ENCODE measurements at regions of chr2 and their contacts with region 1.

Region 1: DNA sequence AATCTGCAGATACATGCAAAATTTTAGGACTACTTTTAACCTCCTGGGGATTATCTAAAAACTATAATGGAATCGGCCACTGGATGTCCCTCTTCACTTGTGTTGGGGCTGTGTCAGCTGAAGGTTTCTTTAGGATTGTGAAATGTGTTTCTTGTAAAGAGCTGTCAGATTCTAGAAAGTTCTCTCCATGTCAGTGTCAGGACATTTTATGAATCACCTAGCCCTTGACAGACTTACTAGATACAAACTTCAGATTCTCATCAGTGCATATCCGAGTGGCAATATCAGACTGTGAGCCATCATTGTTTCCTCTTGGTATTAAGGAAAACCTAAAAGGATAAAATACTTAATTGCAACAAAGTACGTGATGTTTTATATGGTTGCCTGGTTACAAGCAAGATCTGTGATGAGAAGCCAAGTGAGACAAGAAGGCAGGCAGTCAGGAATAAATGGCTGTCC is 107.3 kb downstream of the CPS1 start:
- DNase-seq: peak in 1 of 2 experiments; percentile 16
- H3K4me3 ChIP-seq: no peak overlapping the region
- H3K4me3 Mint-ChIP-seq: no peak overlapping the region
- H3K27ac Mint-ChIP-seq: no peak overlapping the region
- H3K4me1 ChIP-seq: no peaks in the 10 kb centered on the region
- H3K4me1 Mint-ChIP-seq: no peaks in the 10 kb centered on the region
- H3K27me3 ChIP-seq: no peaks in the 10 kb centered on the region
- H3K27me3 Mint-ChIP-seq: peaks cover 3% of the 10 kb centered on the region
- CTCF ChIP-seq: peak; percentile 21 to 26

Region 2: GRCh38 chr2:210445116-210445707 is 218.4 kb before region 1 on chr2:
- CTCF ChIA-PET with region 1: no interaction called
- POLR2A ChIA-PET with region 1: no interaction called
- intact Hi-C with region 1: no loop called
- DNase-seq: peak in 1 of 2 experiments; percentile 5
- H3K4me3 ChIP-seq: no peak overlapping the region
- H3K4me3 Mint-ChIP-seq: no peak overlapping the region
- H3K27ac Mint-ChIP-seq: no peak overlapping the region
- H3K4me1 ChIP-seq: no peaks in the 10 kb centered on the region
- H3K4me1 Mint-ChIP-seq: no peaks in the 10 kb centered on the region
- H3K27me3 ChIP-seq: no peaks in the 10 kb centered on the region
- H3K27me3 Mint-ChIP-seq: no peaks in the 10 kb centered on the region
- CTCF ChIP-seq: peak; percentile 48 to 57

Region 3: DNA sequence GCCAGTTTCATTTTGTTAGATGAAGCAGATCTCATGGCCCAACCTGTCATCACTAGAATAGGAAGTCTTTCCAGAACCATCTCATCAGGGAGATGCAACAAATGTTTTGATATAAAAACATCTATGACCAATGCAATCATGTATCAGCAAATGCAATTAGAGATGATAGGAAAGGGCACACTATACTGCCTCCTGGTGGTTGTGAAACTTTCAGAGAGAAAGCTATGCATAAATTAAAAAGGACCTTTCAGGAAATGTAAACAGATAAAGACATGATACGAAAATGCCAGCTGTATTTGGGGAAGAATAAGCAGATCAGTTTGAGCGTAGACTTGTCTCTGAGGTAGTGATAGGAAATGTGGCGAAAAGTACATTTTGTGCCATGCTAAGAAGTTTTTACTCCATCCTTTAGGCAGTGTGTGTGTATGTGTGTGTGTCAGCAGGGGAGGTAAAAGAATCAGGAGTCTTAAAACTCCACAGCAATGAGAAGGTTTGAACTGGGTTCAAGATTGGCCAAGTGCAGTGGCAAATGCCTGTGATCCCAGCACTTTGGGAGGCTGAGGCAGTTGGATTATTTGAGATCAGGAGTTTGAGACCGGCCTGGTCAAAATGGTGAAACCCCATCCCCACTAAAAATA is 372.0 kb after region 1 on chr2:
- CTCF ChIA-PET with region 1: no interaction called
- POLR2A ChIA-PET with region 1: no interaction called
- intact Hi-C with region 1: loop called (anchors 2 kb)
- DNase-seq: peak in 1 of 2 experiments; percentile 19
- H3K4me3 ChIP-seq: no peak overlapping the region
- H3K4me3 Mint-ChIP-seq: no peak overlapping the region
- H3K27ac Mint-ChIP-seq: no peak overlapping the region
- H3K4me1 ChIP-seq: no peaks in the 10 kb centered on the region
- H3K4me1 Mint-ChIP-seq: no peaks in the 10 kb centered on the region
- H3K27me3 ChIP-seq: no peaks in the 10 kb centered on the region
- H3K27me3 Mint-ChIP-seq: peaks cover 3% of the 10 kb centered on the region
- CTCF ChIP-seq: peak in 1 of 2 experiments; percentile 39